ENCODE measurements at regions of chr5 and their contacts with region 1.

Region 1: DNA sequence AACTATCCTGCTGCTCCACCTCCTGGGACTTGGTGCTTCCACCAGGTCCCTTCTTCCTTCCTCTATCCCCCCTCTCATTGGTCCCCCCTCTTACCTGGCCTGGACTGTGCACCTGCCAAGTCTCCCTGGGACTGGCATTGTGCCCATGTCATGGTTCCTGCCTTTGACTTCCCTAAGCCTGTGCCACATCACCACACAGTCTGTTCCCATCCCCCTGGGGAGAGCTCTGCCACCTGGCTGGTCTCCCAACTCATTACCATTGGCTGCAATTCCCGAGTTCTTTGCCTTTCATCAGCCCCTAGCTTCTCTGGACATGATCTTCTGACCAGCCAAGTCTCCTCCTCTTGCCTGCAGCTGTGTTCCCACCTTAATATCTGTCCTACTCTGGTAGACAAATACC is 180.3 kb downstream of the SREK1 start:
- DNase-seq: peak; percentile 54 to 76
- ATAC-seq: peak; percentile 67 to 93 (median 84)
- H3K4me3 ChIP-seq: no peak overlapping the region
- H3K27ac ChIP-seq: peak overlapping the region in 7 of 10 donors; percentile 39 to 85 (median 82)
- H3K4me1 ChIP-seq: peaks cover 0 to 38% (median 0%) of the 10 kb centered on the region in 9 donors
- H3K27me3 ChIP-seq: no peaks in the 10 kb centered on the region
- CTCF ChIP-seq: no peak

Region 2: DNA sequence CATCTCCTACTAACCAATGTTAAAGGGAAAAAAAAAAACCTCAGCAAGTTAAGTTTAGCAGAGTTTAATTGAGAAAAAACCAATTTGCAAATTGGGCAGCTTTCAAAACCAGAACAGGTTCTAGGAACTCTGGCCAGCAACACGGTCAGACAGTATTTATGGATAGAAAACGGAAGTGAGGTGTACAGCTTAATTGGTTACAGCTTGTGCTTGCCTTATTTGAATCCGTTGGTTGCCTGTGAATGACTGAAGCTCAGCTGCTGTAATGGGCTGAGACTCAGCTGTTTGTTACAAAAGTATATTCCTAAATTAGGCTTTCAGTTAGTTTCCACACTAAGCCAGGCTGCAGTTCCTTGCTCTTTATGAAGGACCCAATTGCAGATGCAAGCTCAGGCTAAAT is 36.7 kb after region 1 on chr5:
- intact Hi-C with region 1: loop called in 3 of 10 experiments (anchors 2 to 5 kb)
- DNase-seq: no peak
- ATAC-seq: peak in 4 of 8 donors; percentile 26 to 49 (median 42)
- H3K4me3 ChIP-seq: no peak overlapping the region
- H3K27ac ChIP-seq: peak overlapping the region in 7 of 10 donors; percentile 56 to 93 (median 84)
- H3K4me1 ChIP-seq: peaks cover 0 to 67% (median 14%) of the 10 kb centered on the region in 9 donors
- H3K27me3 ChIP-seq: no peaks in the 10 kb centered on the region
- CTCF ChIP-seq: no peak

Region 3: DNA sequence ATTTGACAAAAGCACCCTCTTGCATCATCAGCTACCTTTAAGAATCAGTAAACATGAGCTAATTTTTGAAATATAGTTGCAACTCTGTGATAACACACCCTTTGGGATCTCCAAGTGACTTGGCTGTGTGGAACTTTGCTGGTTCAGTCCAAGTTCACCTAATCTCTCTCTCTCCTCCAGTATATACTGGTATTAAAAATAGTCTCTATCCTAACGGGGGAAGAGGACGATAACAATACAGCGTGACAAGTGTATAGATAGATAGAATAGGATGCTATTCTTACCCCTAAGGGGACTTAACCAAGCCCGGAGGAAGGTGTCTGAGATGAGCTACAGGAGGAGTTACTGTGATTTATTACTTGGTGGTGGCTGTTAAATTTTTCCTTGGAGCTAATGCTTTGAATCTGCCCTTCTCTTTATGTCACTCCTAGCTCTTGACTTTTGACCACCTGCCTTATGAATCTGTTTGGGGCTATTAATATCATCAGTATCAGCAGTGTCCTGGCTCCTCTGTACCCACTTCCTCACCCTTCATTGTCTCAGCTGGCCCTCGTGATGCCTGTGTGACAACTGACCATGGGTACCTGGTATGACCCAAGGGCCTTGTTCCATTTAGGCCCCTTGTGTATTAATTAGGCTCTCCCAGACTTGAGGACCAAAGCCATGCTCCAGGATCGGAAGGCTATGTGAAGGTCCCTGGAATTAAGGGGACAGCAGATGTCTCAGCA is 43.6 kb after region 1 on chr5:
- intact Hi-C with region 1: loop called in 4 of 10 experiments (anchors 1 to 5 kb)
- DNase-seq: peak in 1 of 2 donors; percentile 29
- ATAC-seq: peak; percentile 68 to 93 (median 88)
- H3K4me3 ChIP-seq: no peak overlapping the region
- H3K27ac ChIP-seq: peak overlapping the region; percentile 70 to 93 (median 84)
- H3K4me1 ChIP-seq: peaks cover 5 to 88% (median 17%) of the 10 kb centered on the region in 9 donors
- H3K27me3 ChIP-seq: no peaks in the 10 kb centered on the region
- CTCF ChIP-seq: no peak

Region 4: DNA sequence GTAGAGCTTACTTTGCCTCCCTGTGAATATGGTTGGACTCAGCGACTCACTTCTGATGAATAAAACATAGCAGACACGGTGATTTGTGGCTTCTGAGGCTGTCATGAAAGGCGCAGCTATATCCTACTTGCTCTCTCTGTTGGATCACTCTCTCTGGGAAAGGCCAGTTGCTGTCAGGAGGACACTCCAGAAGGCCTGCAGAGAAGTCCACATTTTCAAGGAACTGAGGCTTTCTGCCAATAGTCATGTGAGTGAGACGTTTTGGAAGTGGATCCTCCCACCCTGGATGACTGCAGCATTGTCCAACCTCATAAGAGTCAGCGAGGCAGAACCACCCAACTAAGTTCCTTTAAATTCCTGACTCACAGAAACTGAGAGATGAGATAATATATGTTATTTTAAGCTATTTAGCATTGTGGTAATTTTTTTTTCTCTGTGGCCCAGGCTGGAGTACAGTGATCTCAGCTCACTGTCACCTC is 115.9 kb after region 1 on chr5:
- intact Hi-C with region 1: loop called in 2 of 10 experiments (anchors 5 to 10 kb)
- DNase-seq: peak in 1 of 2 donors; percentile 68
- ATAC-seq: peak; percentile 64 to 92 (median 88)
- H3K4me3 ChIP-seq: peak overlapping the region in 9 of 10 donors; percentile 23 to 55 (median 50)
- H3K27ac ChIP-seq: peak overlapping the region in 9 of 10 donors; percentile 35 to 83 (median 68)
- H3K4me1 ChIP-seq: peaks cover 0 to 26% (median 11%) of the 10 kb centered on the region in 9 donors
- H3K27me3 ChIP-seq: no peaks in the 10 kb centered on the region
- CTCF ChIP-seq: no peak

Region 5: DNA sequence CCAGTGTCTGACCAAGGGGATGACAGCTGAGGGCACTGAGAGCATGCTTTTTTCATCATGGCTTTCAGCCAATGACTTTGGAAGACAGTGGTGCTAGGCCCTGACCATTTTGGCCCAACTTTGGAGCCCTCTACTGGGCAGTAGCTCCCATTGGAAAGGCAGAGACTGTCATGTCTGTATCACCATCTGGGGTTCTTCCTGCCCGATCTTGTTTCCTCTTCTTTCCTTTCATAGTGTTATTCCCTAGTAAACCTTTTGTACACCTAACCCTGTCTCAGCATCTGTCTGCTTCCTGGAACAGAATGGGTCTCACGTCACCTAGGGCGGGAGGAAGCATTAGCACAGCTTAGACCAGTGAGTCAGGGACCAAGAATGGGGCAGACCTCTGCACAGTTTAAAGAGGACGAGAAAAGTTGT is 174.4 kb after region 1 on chr5:
- intact Hi-C with region 1: loop called in 1 of 10 experiments (anchors 10 kb)
- DNase-seq: peak in 1 of 2 donors; percentile 34
- ATAC-seq: peak; percentile 42 to 93 (median 84)
- H3K4me3 ChIP-seq: no peak overlapping the region
- H3K27ac ChIP-seq: no peak overlapping the region
- H3K4me1 ChIP-seq: peaks cover 0 to 7% (median 0%) of the 10 kb centered on the region in 9 donors
- H3K27me3 ChIP-seq: no peaks in the 10 kb centered on the region
- CTCF ChIP-seq: peak in 8 of 9 donors; percentile 16 to 58 (median 38)

Region 6: GRCh38 chr5:66595756-66596635 is 271.6 kb after region 1 on chr5 and contains the start of gene MAST4:
- intact Hi-C with region 1: loop called in 2 of 10 experiments (anchors 10 kb)
- DNase-seq: peak; percentile 92 to 93
- ATAC-seq: peak; percentile 93 to 96 (median 95)
- H3K4me3 ChIP-seq: peak within 1 kb of the TSS; percentile 63 to 90 (median 75)
- H3K27ac ChIP-seq: peak within 1 kb of the TSS; percentile 44 to 83 (median 80)
- H3K4me1 ChIP-seq: peaks cover 0 to 52% (median 27%) of the 10 kb centered on the region in 9 donors
- H3K27me3 ChIP-seq: peaks cover 0 to 82% (median 0%) of the 10 kb centered on the region in 7 donors
- CTCF ChIP-seq: no peak
- total RNA-seq, gene MAST4: 58.7 to 93.3 (median 78.4) TPM

Measured in heart right ventricle (tissue), 16 donors.